Activated CD8-positive, alpha-beta T cell treated with anti-CD3 and anti-CD28 coated beads for 36 hours (primary cell): ENCODE measurements at regions of chr2 and their contacts with region 1.

Region 1: DNA sequence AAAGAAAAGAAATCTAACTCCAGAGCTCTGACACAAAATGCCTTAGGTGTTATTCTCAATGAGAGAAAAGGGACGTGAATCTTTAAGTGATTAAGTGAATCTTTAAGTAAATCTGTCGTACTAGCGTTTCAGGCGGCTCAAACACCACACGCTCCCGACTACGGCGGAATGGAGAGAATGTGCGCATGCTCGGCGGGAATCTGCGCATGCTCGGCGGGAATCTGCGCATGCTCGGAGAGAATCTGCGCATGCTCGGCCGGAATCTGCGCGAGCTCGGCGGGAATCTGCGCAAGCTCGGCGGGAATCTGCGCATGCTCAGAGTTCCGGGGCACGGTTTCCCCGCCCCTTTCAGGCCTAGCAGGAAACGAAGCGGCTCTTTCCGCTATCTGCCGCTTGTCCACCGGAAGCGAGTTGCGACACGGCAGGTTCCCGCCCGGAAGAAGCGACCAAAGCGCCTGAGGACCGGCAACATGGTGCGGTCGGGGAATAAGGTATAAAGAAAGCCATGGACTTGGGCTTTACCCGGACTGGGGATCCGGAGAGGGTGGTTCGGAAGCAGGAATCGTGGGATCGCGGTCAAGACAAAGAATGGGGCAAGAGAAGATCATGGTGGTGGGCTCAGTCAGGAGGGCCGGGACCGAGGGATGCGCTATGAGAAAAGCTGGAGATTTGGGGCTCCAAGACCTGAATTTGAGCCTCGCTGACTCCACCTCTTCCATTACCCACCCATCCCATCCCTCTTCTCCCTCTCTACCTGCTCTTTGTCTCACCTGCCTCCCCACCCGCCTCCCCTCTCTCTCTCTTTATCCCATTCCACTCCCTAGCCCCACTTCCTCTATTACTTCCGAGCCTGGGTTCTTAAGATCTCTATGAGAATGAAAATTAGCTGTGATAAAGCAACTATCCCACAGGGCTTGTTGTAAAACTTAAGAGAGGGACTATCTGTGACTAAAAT is at the start of gene XRCC5:
- DNase-seq: peak; percentile 98
- ATAC-seq: peak; percentile 81
- H3K4me3 Mint-ChIP-seq: peak within 1 kb of the TSS; percentile 96
- H3K27ac Mint-ChIP-seq: peak within 1 kb of the TSS; percentile 98
- H3K4me1 Mint-ChIP-seq: peaks cover 42% of the 10 kb centered on the region
- H3K27me3 Mint-ChIP-seq: no peaks in the 10 kb centered on the region
- CTCF ChIP-seq: no peak
- total RNA-seq, gene XRCC5: 541 to 544 TPM

Region 2: DNA sequence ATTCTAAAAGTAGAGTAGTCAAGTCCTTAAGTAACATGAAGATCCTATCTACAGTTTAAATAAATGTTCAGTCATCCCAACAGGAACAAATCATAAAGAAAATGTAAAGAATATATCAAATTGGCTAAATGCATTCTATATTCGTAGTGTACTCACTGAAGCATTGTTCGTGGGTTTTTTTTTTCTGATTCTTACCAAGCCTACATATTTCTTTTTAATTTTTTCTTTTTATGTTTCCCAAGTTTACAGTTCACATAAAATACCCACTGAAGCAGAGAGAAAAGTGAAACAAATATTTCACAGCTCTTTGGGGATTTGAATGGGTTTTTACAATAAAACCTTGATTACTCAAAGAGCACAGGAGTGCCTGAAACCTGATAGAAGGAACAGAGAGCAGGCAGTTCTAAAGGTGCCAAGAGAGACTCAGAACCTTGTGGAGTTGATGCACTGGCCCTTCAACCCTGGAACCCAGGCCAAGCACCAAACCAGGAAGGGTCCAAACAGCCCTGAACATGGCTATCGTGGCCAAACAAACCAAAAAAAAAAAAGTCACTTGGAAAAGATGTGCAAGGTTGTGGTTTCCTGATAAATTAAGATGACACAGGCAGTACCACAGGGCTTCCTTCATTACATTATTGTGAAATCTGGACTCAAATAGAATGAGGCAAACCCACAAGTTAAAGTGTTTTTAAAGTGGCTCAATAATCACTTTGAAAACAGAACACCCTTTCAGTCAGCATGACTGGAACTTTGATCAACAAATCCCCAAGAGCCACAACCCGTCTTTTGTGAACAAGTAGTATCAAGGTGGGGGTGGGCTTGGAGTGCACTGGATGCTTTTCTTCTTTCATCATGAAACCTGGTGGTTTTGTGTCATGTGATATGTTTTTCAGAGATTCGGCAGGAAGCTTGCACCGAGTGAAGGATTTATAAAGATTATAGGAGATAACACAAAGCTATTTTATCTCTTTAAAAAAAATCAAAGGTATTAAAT is 428.3 kb before region 1 on chr2:
- CTCF ChIA-PET with region 1: no interaction called
- POLR2A ChIA-PET with region 1: no interaction called
- intact Hi-C with region 1: no loop called
- DNase-seq: peak; percentile 51
- ATAC-seq: peak; percentile 85
- H3K4me3 Mint-ChIP-seq: no peak overlapping the region
- H3K27ac Mint-ChIP-seq: peak overlapping the region; percentile 69
- H3K4me1 Mint-ChIP-seq: peaks cover 19% of the 10 kb centered on the region
- H3K27me3 Mint-ChIP-seq: no peaks in the 10 kb centered on the region
- CTCF ChIP-seq: no peak

Region 3: DNA sequence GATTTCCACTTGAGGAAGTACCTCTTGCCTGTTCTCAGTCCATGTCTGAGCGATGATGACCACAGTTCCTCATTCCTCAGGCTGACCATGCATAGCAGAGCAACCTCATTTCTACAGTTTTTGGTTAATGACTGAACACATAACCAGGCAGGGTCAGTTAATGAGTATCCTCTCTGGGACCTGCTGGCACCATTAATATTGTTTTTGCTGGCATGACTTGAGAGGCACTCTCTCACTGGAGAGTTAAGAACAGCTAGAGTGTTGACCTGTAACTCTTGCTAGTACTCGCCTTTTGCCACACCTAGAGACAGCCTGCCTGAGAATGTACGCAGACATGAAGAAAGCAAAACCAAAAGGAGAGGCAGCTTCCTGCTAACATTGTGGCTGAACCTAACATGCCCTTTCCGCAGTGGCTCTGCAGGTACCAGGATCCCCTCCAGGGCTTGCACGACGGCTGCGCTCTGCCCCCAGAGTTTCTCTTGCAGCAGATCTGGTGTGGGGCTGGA is 51.5 kb before region 1 on chr2:
- CTCF ChIA-PET with region 1: interaction called, 14 read pairs
- POLR2A ChIA-PET with region 1: no interaction called
- intact Hi-C with region 1: no loop called
- DNase-seq: peak; percentile 80
- ATAC-seq: peak; percentile 98
- H3K4me3 Mint-ChIP-seq: peak overlapping the region; percentile 67
- H3K27ac Mint-ChIP-seq: peak overlapping the region; percentile 87
- H3K4me1 Mint-ChIP-seq: peaks cover 33% of the 10 kb centered on the region
- H3K27me3 Mint-ChIP-seq: no peaks in the 10 kb centered on the region
- CTCF ChIP-seq: no peak

Region 4: DNA sequence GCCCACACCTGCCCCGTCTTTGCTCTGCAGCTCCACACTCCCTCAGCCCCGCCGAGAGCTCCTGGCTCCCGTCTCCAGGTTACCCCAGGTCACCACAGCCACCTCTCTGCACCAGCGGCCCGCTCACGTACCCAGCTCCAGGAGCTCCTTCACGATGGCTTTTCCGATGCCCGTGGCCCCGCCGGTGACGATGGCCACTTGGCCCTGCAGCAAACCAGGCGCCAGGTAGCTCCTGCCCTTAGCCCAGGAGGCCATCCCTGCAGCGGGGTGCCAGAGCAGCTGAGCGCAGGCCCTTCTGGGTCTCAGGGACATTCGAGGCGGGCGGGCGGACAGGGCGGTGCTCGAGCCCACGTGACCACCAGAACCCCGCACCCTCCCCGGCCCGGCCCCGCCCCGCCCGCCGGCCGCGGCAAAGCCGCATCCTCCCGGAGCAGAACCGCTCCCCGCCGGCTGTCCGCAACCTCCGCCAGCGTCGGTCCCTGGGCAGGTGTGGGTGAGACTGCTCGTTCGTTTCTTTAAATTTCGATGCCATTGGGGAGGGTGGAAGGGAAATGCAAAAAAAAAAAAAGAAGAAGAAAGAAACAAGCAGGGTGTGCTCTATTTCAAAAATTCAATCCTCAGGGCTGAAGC is 27.6 kb before region 1 on chr2 and contains the starts of genes PECR and TMEM169:
- CTCF ChIA-PET with region 1: interaction called, 18 read pairs
- POLR2A ChIA-PET with region 1: interaction called, 41 read pairs
- intact Hi-C with region 1: no loop called
- DNase-seq: peak; percentile 82
- ATAC-seq: peak; percentile 91
- H3K4me3 Mint-ChIP-seq: peak within 1 kb of the TSS; percentile 89
- H3K27ac Mint-ChIP-seq: peak within 1 kb of the TSS; percentile 84
- H3K4me1 Mint-ChIP-seq: peaks cover 51% of the 10 kb centered on the region
- H3K27me3 Mint-ChIP-seq: no peaks in the 10 kb centered on the region
- CTCF ChIP-seq: no peak
- total RNA-seq, gene PECR: 21.1 to 22.5 TPM
- total RNA-seq, gene TMEM169: 0.76 to 0.83 TPM

Region 5: DNA sequence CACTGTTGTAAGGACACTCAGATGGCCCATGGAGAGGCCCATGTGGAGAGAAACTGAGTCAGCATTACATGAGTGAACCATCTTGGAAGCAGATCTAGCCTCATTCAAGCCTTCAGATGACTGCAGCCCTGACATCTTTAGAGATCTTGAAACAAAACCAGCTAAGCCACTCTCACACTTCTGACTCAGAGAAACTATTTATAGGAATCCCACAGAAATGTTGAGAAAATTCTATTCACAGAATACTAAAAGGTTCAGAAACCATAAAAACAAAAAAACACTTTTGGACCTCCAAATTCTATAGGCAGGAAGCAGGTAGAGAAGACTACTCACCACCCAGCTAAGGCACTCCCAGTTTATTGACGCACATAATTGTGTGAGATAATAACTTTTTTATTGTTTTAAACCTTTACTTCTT is 18.9 kb before region 1 on chr2:
- CTCF ChIA-PET with region 1: interaction called, 18 read pairs
- POLR2A ChIA-PET with region 1: interaction called, 41 read pairs
- intact Hi-C with region 1: no loop called
- DNase-seq: no peak
- ATAC-seq: peak; percentile 83
- H3K4me3 Mint-ChIP-seq: no peak overlapping the region
- H3K27ac Mint-ChIP-seq: peak overlapping the region; percentile 75
- H3K4me1 Mint-ChIP-seq: peaks cover 25% of the 10 kb centered on the region
- H3K27me3 Mint-ChIP-seq: no peaks in the 10 kb centered on the region
- CTCF ChIP-seq: no peak

Region 6: GRCh38 chr2:216139884-216140283 is 30.6 kb after region 1 on chr2:
- CTCF ChIA-PET with region 1: interaction called, 29 read pairs
- POLR2A ChIA-PET with region 1: interaction called, 3 read pairs
- intact Hi-C with region 1: no loop called
- DNase-seq: peak; percentile 66
- ATAC-seq: no peak
- H3K4me3 Mint-ChIP-seq: no peak overlapping the region
- H3K27ac Mint-ChIP-seq: peak overlapping the region; percentile 55
- H3K4me1 Mint-ChIP-seq: peaks cover 49% of the 10 kb centered on the region
- H3K27me3 Mint-ChIP-seq: no peaks in the 10 kb centered on the region
- CTCF ChIP-seq: peak; percentile 52

Region 7: GRCh38 chr2:216149741-216150140 is 40.5 kb after region 1 on chr2:
- CTCF ChIA-PET with region 1: interaction called, 15 read pairs
- POLR2A ChIA-PET with region 1: interaction called, 3 read pairs
- intact Hi-C with region 1: no loop called
- DNase-seq: no peak
- ATAC-seq: no peak
- H3K4me3 Mint-ChIP-seq: no peak overlapping the region
- H3K27ac Mint-ChIP-seq: peak overlapping the region; percentile 64
- H3K4me1 Mint-ChIP-seq: peaks cover 39% of the 10 kb centered on the region
- H3K27me3 Mint-ChIP-seq: no peaks in the 10 kb centered on the region
- CTCF ChIP-seq: no peak